ENCODE measurements at regions of chr3 and their contacts with region 1.

Region 1: GRCh38 chr3:58324391-58325390 is 8.0 kb upstream of the PXK start:
- DNase-seq: no peak
- H3K4me3 Mint-ChIP-seq: no peak overlapping the region
- H3K27ac Mint-ChIP-seq: peak overlapping the region; percentile 62
- H3K4me1 Mint-ChIP-seq: peaks cover 28% of the 10 kb centered on the region
- H3K27me3 Mint-ChIP-seq: no peaks in the 10 kb centered on the region

Region 2: DNA sequence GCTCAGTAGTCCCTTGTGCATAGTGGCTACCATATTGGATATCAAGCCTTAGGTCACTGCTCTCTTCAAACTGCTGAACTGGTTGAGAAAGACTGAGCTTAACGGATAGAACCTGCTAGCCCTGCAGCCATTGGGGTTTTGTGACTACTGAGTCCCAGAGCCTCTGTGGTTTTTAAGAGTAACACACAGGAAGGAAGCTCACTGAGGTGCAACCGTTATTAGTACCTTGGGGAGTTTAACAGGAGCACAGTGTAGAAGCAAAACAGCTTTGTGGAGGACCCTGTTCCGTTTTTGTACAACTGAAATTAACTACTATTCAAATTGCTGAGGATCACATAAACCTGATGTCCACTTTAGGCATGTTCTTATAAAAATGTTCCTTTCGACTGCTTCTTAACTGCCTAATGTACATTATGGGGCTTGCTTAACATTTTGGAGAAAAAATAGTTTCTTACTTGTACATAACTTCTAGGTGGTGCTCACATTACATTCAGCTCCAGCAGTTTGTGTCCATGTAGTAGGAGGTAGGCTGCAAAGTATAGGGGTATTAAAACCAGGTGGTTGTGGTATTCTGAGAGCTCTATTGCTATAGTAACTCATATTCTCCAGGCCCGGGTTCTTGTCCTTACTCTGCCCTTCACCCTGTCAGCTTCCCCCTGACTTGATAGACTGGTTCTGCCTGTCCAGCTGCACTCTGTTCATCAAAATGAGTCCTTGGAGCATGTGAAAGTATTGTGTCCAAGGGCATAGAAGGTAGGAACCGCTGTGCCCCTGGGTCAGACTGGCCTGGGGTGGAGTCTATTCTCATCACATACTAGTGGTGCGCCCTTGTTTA is 25.3 kb after region 1 on chr3:
- CTCF ChIA-PET with region 1: interaction called, 14 read pairs
- DNase-seq: no peak
- H3K4me3 Mint-ChIP-seq: no peak overlapping the region
- H3K27ac Mint-ChIP-seq: peak overlapping the region; percentile 45
- H3K4me1 Mint-ChIP-seq: peaks cover 65% of the 10 kb centered on the region
- H3K27me3 Mint-ChIP-seq: no peaks in the 10 kb centered on the region

Region 3: DNA sequence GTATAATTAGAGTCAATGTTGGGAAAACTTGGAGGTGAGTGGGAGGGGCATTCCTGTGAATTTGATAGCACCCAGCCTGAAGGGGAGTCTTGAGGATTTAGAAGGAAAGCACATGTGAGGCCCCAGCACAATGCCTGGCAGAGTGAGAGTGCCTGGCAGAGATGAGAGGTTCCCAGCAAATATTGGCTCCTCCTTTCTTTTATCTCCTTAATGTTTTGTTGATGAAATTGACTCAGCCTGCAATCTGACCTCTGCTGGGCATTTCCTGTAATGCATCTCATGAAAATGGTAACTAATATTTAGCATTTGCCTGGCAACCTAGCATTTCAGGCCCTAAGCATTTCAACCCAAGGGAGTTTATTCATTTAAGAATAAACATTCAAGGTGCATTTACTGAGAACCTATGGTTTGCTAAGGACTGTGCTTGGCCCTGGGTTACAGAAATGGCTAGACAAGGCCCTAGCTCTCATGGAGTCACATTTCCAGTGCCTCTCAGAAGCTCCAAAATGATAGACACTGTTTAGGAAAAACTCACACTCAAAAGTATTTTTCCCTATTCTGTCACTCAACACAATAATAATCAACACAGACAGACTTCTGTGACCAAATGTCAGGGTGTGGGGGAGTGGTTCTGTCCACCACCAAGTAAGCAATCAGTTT is 90.0 kb after region 1 on chr3:
- CTCF ChIA-PET with region 1: interaction called, 30 read pairs
- DNase-seq: peak; percentile 64
- H3K4me3 Mint-ChIP-seq: no peak overlapping the region
- H3K27ac Mint-ChIP-seq: no peak overlapping the region
- H3K4me1 Mint-ChIP-seq: peaks cover 6% of the 10 kb centered on the region
- H3K27me3 Mint-ChIP-seq: no peaks in the 10 kb centered on the region

Measured in activated naive CD4-positive, alpha-beta T cell treated with anti-CD3 and anti-CD28 coated beads, Interleukin-2, amount 10 ng/mL, durations not matched to agents 7 days and 5 days (primary cell).